ENCODE measurements at regions of chr17 and their contacts with region 1.

Region 1: GRCh38 chr17:30921544-30922196 is at the start of gene ADAP2:
- H3K4me3 Mint-ChIP-seq: peak within 1 kb of the TSS; percentile 85
- H3K27ac Mint-ChIP-seq: peak within 1 kb of the TSS; percentile 94
- H3K4me1 Mint-ChIP-seq: peaks cover 51% of the 10 kb centered on the region
- H3K27me3 Mint-ChIP-seq: peaks cover 6% of the 10 kb centered on the region

Region 2: GRCh38 chr17:30906101-30906911 is 15.4 kb before region 1 on chr17 and contains the start of gene TEFM:
- intact Hi-C with region 1: loop called (anchors 2 kb)
- H3K4me3 Mint-ChIP-seq: peak within 1 kb of the TSS; percentile 91
- H3K27ac Mint-ChIP-seq: peak within 1 kb of the TSS; percentile 88
- H3K4me1 Mint-ChIP-seq: peaks cover 37% of the 10 kb centered on the region
- H3K27me3 Mint-ChIP-seq: no peaks in the 10 kb centered on the region

Region 3: DNA sequence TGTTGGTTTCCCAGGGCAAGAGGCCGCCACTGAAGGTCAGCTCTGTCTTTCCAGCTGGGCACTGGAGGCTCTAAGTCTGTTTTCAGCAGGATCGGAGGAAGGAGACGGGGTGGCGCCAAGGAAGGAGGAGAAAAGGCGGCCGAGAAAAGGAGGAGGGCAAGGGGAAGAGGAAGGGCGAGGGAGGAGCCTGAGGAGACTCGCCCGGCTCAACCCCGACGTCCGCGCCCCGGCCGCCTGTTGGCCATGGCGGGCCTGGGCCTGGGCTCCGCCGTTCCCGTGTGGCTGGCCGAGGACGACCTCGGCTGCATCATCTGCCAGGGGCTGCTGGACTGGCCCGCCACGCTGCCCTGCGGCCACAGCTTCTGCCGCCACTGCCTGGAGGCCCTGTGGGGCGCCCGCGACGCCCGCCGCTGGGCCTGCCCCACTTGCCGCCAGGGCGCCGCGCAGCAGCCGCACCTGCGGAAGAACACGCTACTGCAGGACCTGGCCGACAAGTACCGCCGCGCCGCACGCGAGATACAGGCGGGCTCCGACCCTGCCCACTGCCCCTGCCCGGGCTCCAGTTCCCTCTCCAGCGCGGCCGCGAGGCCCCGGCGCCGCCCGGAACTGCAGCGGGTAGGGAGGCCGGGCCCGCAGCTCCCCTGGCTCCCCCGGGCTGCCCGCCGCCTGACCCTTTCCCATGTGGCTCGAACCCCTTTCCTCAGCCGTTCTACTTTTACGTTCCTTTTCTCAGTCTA is 49.3 kb after region 1 on chr17 and contains the start of gene RNF135:
- intact Hi-C with region 1: loop called (anchors 5 kb)
- H3K4me3 Mint-ChIP-seq: peak within 1 kb of the TSS; percentile 98
- H3K27ac Mint-ChIP-seq: peak within 1 kb of the TSS; percentile 94
- H3K4me1 Mint-ChIP-seq: peaks cover 51% of the 10 kb centered on the region
- H3K27me3 Mint-ChIP-seq: no peaks in the 10 kb centered on the region

Region 4: DNA sequence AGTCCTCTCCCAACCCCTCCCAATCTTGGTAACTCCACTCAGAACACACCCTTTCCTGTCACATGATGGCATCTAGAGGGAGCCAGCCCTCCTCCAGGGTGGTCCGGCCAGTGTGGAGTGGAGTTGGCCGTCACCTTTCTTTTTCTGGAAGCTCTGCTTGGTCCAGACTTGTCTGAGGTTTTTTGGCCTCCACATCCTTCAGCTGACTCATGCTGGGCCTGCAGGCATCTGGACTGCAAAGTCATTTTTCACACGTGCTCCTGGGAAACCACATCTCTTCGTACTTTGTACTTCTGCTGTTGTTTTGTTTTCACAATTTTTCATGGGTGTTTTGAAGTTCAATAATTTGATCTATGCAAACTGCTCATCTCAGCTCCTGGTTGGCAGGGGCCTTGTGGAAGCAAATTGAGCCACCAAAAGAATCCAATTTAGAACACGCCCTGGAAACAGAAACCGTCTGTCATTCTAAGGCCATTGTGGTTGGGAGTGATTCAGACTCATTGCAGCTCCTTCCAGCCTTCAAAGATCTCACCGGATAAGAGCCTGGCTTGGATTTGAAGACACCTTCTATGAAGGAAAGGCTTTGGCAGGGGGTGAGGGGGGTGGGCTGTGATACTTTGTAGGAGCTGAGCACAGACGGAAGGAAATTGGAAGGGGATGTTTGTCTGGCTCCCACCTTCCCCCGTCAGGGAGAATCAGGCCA is 130.7 kb after region 1 on chr17:
- intact Hi-C with region 1: no loop called
- H3K4me3 Mint-ChIP-seq: peak overlapping the region; percentile 42
- H3K27ac Mint-ChIP-seq: peak overlapping the region; percentile 88
- H3K4me1 Mint-ChIP-seq: peaks cover 36% of the 10 kb centered on the region
- H3K27me3 Mint-ChIP-seq: no peaks in the 10 kb centered on the region

Region 5: GRCh38 chr17:31068291-31068690 is 146.6 kb after region 1 on chr17:
- intact Hi-C with region 1: no loop called
- H3K4me3 Mint-ChIP-seq: no peak overlapping the region
- H3K27ac Mint-ChIP-seq: no peak overlapping the region
- H3K4me1 Mint-ChIP-seq: peaks cover 17% of the 10 kb centered on the region
- H3K27me3 Mint-ChIP-seq: no peaks in the 10 kb centered on the region

Region 6: GRCh38 chr17:31216053-31216751 is 294.5 kb after region 1 on chr17:
- intact Hi-C with region 1: loop called (anchors 10 kb)
- H3K4me3 Mint-ChIP-seq: no peak overlapping the region
- H3K27ac Mint-ChIP-seq: no peak overlapping the region
- H3K4me1 Mint-ChIP-seq: no peaks in the 10 kb centered on the region
- H3K27me3 Mint-ChIP-seq: no peaks in the 10 kb centered on the region

Measured in dendritic cell treated with granulocyte-macrophage colony-stimulating factor and Interleukin-4, amounts not matched to agents 40 ng/mL and 50 ng/mL, for 4 days (primary cell).